Activated CD4-positive, alpha-beta T cell treated with anti-CD3 and anti-CD28 coated beads for 36 hours (primary cell): ENCODE measurements at regions of chr18 and their contacts with region 1.

Region 1: GRCh38 chr18:59459369-59460079 is 100.5 kb upstream of the LMAN1 start:
- DNase-seq: no peak
- ATAC-seq: no peak
- H3K4me3 Mint-ChIP-seq: no peak overlapping the region
- H3K27ac Mint-ChIP-seq: no peak overlapping the region
- H3K4me1 Mint-ChIP-seq: no peaks in the 10 kb centered on the region
- H3K27me3 Mint-ChIP-seq: peaks cover 17% of the 10 kb centered on the region

Region 2: GRCh38 chr18:59446012-59446411 is 13.5 kb before region 1 on chr18:
- CTCF ChIA-PET with region 1: interaction called, 18 read pairs
- POLR2A ChIA-PET with region 1: no interaction called
- intact Hi-C with region 1: no loop called
- DNase-seq: no peak
- ATAC-seq: no peak
- H3K4me3 Mint-ChIP-seq: no peak overlapping the region
- H3K27ac Mint-ChIP-seq: no peak overlapping the region
- H3K4me1 Mint-ChIP-seq: no peaks in the 10 kb centered on the region
- H3K27me3 Mint-ChIP-seq: peaks cover 11% of the 10 kb centered on the region